Gastrocnemius medialis (tissue), 4 donors: ENCODE measurements at regions of chr2 and their contacts with region 1.

Region 1: GRCh38 chr2:36966370-36967235 is at the start of gene STRN:
- DNase-seq: peak; percentile 90 to 96
- ATAC-seq: peak; percentile 88 to 91
- H3K4me3 ChIP-seq: peak within 1 kb of the TSS; percentile 70 to 97 (median 88)
- H3K27ac ChIP-seq: peak within 1 kb of the TSS; percentile 81 to 97 (median 90)
- H3K4me1 ChIP-seq: peaks cover 28% of the 10 kb centered on the region in 2 donors
- H3K27me3 ChIP-seq: no peaks in the 10 kb centered on the region
- CTCF ChIP-seq: peak in 1 of 5 experiments; percentile 32
- POLR2A ChIP-seq: peak; percentile 94 to 98
- total RNA-seq, gene STRN: 21.3 to 52.0 (median 38.5) TPM

Region 2: GRCh38 chr2:36597532-36598377 is 368.8 kb before region 1 on chr2 and contains the start of gene FEZ2:
- in situ Hi-C with region 1: no loop called
- intact Hi-C with region 1: loop called (anchors 5 kb)
- DNase-seq: peak; percentile 64 to 82
- ATAC-seq: peak; percentile 89 to 91
- H3K4me3 ChIP-seq: peak within 1 kb of the TSS; percentile 78 to 93 (median 85)
- H3K27ac ChIP-seq: peak within 1 kb of the TSS; percentile 92 to 97 (median 94)
- H3K4me1 ChIP-seq: peaks cover 31 to 42% of the 10 kb centered on the region in 2 donors
- H3K27me3 ChIP-seq: no peaks in the 10 kb centered on the region
- CTCF ChIP-seq: no peak
- POLR2A ChIP-seq: peak in 1 of 2 donors; percentile 37
- total RNA-seq, gene FEZ2: 65.1 to 126 (median 110) TPM

Region 3: DNA sequence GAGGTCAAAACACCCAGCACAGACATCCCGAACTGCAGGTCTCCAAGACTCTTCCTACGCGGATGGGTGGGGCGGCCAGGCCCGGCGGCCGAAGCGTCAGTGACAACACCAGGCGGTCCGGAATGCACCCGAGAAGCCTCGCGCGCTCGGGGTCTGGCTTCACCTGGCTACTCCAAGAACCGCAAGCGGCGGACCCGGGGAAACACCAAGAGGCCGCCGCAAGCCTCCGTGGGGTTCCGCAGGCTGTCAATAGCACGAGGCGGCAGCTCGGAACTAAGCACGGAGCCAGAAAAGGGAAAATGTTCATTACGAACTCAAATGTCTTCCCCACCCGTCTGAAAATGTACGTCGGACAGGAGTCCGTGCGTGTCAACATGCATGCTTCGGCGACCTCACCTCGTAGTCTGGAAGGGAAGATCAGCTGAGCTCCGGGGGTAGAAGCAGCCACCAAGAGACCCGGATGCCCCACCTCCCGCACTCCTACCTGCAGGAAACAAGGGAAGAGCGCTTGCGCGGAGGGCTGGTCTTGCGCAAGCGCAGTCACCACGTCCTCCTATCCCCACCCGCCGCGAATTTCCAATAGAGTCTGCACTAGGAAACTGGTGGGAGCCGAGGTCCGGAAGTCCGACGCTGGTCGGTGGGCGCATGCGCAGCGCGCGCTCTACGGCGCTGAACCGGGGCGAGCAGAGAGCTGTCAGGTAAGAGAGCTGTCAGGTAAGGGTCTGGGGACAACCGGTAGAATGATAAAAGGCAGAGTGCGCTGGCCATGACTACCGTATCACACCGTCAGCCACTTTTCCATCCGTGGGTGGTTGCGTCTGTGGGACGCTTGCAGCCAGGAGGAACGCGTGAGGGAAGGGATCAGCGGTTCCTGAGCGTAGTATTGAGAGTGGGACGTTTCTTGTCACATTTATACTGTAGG is 117.5 kb after region 1 on chr2 and contains the starts of genes GPATCH11 and HEATR5B:
- in situ Hi-C with region 1: no loop called
- intact Hi-C with region 1: loop called (anchors 1 kb)
- DNase-seq: peak; percentile 95 to 96
- ATAC-seq: peak; percentile 99
- H3K4me3 ChIP-seq: peak within 1 kb of the TSS; percentile 65 to 96 (median 90)
- H3K27ac ChIP-seq: peak within 1 kb of the TSS; percentile 83 to 91 (median 84)
- H3K4me1 ChIP-seq: peaks cover 28 to 33% of the 10 kb centered on the region in 2 donors
- H3K27me3 ChIP-seq: no peaks in the 10 kb centered on the region
- CTCF ChIP-seq: no peak
- POLR2A ChIP-seq: peak; percentile 55
- total RNA-seq, gene GPATCH11: 2.5 to 3.7 (median 3.0) TPM
- total RNA-seq, gene HEATR5B: 6.8 to 10.0 (median 9.8) TPM

Region 4: GRCh38 chr2:37984589-37984988 is 1018.0 kb after region 1 on chr2:
- in situ Hi-C with region 1: no loop called
- intact Hi-C with region 1: no loop called
- DNase-seq: no peak
- ATAC-seq: no peak
- H3K4me3 ChIP-seq: no peak overlapping the region
- H3K27ac ChIP-seq: no peak overlapping the region
- H3K4me1 ChIP-seq: peaks cover 0 to 5% of the 10 kb centered on the region in 2 donors
- H3K27me3 ChIP-seq: no peaks in the 10 kb centered on the region
- CTCF ChIP-seq: no peak
- POLR2A ChIP-seq: no peak